MCF 10A (cell line): ENCODE measurements at regions of chr7 and their contacts with region 1.

Region 1: GRCh38 chr7:157010588-157011332 is at the start of gene MNX1:
- DNase-seq: peak; percentile 84
- H3K4me3 Mint-ChIP-seq: peak within 1 kb of the TSS; percentile 68
- H3K27ac Mint-ChIP-seq: no peak within 1 kb of the TSS
- H3K4me1 Mint-ChIP-seq: no peaks in the 10 kb centered on the region
- H3K27me3 Mint-ChIP-seq: no peaks in the 10 kb centered on the region
- CTCF ChIP-seq: no peak
- total RNA-seq, gene MNX1: 0.42 and 0.47 TPM in 2 replicates

Region 2: GRCh38 chr7:157138424-157139110 is 127.8 kb after region 1 on chr7 and contains the start of gene UBE3C:
- CTCF ChIA-PET with region 1: no interaction called
- POLR2A ChIA-PET with region 1: interaction called, 18 read pairs
- intact Hi-C with region 1: loop called (anchors 5 kb)
- DNase-seq: peak; percentile 86
- H3K4me3 Mint-ChIP-seq: peak within 1 kb of the TSS; percentile 82
- H3K27ac Mint-ChIP-seq: peak within 1 kb of the TSS; percentile 80
- H3K4me1 Mint-ChIP-seq: peaks cover 29% of the 10 kb centered on the region
- H3K27me3 Mint-ChIP-seq: no peaks in the 10 kb centered on the region
- CTCF ChIP-seq: no peak
- total RNA-seq, gene UBE3C: 61.9 and 72.8 TPM in 2 replicates